ENCODE measurements at regions of chr12 and their contacts with region 1.

Region 1: DNA sequence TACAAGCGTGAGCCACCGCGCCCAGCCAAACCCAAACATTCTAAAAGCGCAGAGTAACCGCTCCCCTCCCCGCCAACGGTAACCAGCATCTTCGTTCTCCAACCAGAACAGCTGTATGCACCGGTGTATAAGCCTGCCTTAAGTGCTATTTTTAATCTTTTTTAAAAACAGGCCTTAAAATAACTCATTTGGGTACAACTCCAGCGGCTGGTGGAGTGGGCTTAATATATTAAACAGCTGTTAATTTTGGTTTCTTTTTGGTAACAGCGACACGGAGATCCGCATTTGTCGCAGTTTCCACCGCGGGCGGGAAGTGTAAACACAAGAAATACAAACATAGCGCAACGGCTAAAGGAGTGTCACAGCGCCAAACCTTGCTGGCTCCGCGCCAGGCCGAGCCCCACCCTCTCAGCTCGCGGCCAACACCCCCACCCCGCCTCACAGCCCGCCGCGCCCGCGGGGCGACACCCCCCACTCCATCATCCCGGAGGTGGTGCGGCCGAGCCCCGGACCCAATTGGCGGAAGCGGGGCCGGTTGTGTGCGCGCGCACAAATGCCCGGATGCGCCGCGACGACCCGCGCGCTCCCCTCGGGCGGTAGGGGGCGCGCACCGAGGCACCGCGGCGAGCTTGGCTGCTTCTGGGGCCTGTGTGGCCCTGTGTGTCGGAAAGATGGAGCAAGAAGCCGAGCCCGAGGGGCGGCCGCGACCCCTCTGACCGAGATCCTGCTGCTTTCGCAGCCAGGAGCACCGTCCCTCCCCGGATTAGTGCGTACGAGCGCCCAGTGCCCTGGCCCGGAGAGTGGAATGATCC is at the start of gene MDM2:
- DNase-seq: peak; percentile 99
- H3K4me3 Mint-ChIP-seq: peak within 1 kb of the TSS; percentile 98
- H3K27ac Mint-ChIP-seq: peak within 1 kb of the TSS; percentile 100
- H3K4me1 Mint-ChIP-seq: peaks cover 50% of the 10 kb centered on the region
- H3K27me3 Mint-ChIP-seq: no peaks in the 10 kb centered on the region
- total RNA-seq, gene MDM2: 194 to 201 TPM

Region 2: GRCh38 chr12:68119724-68120211 is 688.0 kb before region 1 on chr12:
- CTCF ChIA-PET with region 1: no interaction called
- POLR2A ChIA-PET with region 1: interaction called, 11 read pairs
- DNase-seq: peak; percentile 78
- H3K4me3 Mint-ChIP-seq: peak overlapping the region; percentile 28
- H3K27ac Mint-ChIP-seq: no peak overlapping the region
- H3K4me1 Mint-ChIP-seq: peaks cover 31% of the 10 kb centered on the region
- H3K27me3 Mint-ChIP-seq: no peaks in the 10 kb centered on the region

Region 3: DNA sequence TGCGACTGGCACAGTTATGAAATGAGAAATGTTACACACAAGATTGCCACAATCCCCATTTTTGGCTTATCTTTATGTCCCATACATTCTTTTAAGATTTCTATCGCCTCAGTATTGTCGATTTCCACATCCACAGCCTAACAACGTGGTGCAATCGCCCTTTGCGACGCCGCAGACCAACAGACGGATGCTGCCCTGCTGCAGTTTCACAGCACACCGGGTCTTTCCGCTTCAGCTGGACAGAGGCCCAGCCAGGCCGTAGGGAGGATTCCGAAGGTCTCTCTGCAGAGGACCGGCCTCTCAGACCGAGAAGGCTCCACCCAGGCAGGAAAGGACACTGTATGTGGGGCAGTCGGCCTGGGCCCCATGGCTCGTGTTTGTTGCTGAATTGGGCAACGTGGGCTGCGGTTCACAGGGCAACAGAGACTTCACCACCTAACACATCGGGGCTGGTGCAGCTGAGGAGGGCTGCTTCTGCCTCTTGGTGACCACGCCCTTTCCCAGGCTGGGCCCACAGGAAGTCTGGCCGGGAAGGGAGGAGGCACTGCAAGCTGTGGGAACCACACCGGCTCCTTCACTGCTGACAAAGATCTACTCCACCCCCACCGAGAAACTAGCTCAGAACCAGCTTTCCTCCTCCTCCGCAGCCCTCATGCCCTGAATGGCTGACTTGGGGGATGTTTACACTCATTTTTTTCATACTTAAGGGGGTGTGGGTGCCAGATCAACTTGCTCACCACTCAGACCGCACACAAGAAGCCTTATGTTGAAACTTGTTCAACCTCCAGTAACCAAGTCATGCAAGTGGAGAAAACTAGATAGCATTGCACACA is 442.7 kb before region 1 on chr12:
- CTCF ChIA-PET with region 1: no interaction called
- POLR2A ChIA-PET with region 1: interaction called, 19 read pairs
- DNase-seq: peak; percentile 95
- H3K4me3 Mint-ChIP-seq: peak overlapping the region; percentile 73
- H3K27ac Mint-ChIP-seq: peak overlapping the region; percentile 96
- H3K4me1 Mint-ChIP-seq: peaks cover 68% of the 10 kb centered on the region
- H3K27me3 Mint-ChIP-seq: no peaks in the 10 kb centered on the region

Region 4: DNA sequence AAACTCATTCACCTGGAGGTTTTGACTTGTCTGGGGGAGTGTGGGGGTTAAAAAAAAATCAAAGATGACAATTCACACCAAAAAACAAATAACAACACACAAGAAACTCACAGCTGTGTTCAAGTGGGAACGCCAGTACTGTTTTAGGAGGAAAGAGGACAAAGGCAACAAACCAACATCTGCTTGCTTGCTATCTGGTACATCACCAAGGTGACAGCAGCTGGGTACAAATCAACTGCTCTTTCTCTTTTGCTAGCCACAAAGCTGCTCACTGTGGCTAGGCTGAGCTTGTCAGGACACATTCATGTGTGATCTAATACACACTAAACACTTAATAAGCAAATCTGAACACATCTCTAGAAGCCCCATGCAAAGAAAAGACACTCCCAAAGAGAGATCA is 325.1 kb before region 1 on chr12:
- CTCF ChIA-PET with region 1: interaction called, 3 read pairs
- POLR2A ChIA-PET with region 1: interaction called, 17 read pairs
- DNase-seq: peak; percentile 73
- H3K4me3 Mint-ChIP-seq: peak overlapping the region; percentile 42
- H3K27ac Mint-ChIP-seq: peak overlapping the region; percentile 90
- H3K4me1 Mint-ChIP-seq: peaks cover 69% of the 10 kb centered on the region
- H3K27me3 Mint-ChIP-seq: no peaks in the 10 kb centered on the region

Region 5: DNA sequence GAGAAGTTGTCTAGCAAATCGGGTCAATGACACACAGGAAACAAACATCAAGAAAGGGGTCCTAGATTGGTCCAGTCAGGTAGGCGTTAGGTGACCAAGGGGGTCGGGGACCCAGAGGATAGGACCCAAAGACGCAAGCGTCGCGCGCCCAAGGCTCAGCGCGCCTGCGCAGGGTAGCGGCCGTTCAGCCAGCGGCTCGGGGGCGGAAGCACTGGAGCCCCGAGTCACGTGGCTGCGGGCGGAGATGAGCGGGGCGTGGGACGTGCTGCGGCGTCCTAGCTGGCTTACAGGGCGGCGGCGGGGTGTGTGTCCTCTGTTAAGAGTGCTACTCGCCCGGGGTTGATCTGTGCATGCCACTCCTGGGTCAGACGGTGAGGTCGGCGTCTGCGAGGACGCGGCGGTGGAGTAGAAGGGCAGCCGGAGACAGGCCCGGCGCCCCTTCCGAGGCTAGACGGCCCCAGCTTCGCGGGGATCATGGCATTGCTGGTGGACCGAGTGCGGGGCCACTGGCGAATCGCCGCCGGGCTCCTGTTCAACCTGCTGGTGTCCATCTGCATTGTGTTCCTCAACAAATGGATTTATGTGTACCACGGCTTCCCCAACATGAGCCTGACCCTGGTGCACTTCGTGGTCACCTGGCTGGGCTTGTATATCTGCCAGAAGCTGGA is 61.7 kb before region 1 on chr12 and contains the start of gene SLC35E3:
- CTCF ChIA-PET with region 1: interaction called, 29 read pairs
- POLR2A ChIA-PET with region 1: interaction called, 80 read pairs
- DNase-seq: peak; percentile 95
- H3K4me3 Mint-ChIP-seq: peak within 1 kb of the TSS; percentile 95
- H3K27ac Mint-ChIP-seq: peak within 1 kb of the TSS; percentile 80
- H3K4me1 Mint-ChIP-seq: peaks cover 51% of the 10 kb centered on the region
- H3K27me3 Mint-ChIP-seq: no peaks in the 10 kb centered on the region
- total RNA-seq, gene SLC35E3: 8.2 to 8.8 TPM

Region 6: DNA sequence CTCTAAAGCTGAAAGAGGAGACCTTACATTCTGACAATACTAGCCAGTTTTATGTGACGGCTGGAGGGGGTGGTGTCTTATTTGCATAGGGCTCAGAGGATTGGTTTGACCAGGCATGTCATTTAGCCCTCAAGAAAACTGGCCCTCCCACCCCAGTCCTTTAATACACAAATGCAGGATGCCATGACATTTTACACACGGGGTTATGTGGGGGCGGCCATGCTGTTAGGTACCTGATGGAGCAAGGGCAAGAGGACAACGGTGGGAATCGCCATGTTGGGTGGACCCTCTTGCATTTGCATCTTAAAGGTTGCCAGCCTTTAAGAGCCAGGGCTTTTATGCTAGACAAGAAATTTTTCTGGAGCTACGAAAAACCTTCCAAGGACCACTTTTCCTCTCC is 23.5 kb after region 1 on chr12:
- CTCF ChIA-PET with region 1: interaction called, 65 read pairs
- POLR2A ChIA-PET with region 1: interaction called, 20 read pairs
- DNase-seq: no peak
- H3K4me3 Mint-ChIP-seq: no peak overlapping the region
- H3K27ac Mint-ChIP-seq: no peak overlapping the region
- H3K4me1 Mint-ChIP-seq: peaks cover 20% of the 10 kb centered on the region
- H3K27me3 Mint-ChIP-seq: no peaks in the 10 kb centered on the region

Region 7: GRCh38 chr12:69321351-69321750 is 513.6 kb after region 1 on chr12:
- CTCF ChIA-PET with region 1: no interaction called
- POLR2A ChIA-PET with region 1: no interaction called
- DNase-seq: no peak
- H3K4me3 Mint-ChIP-seq: no peak overlapping the region
- H3K27ac Mint-ChIP-seq: no peak overlapping the region
- H3K4me1 Mint-ChIP-seq: peaks cover 4% of the 10 kb centered on the region
- H3K27me3 Mint-ChIP-seq: peaks cover 8% of the 10 kb centered on the region